Colonic mucosa (tissue), 4 donors: ENCODE measurements at regions of chr21 and their contacts with region 1.

Region 1: GRCh38 chr21:42593007-42593806 is 60.2 kb upstream of the PDE9A start:
- DNase-seq: peak; percentile 84
- H3K4me3 ChIP-seq: no peak overlapping the region
- H3K27ac ChIP-seq: no peak overlapping the region
- H3K4me1 ChIP-seq: peaks cover 6% of the 10 kb centered on the region
- H3K27me3 ChIP-seq: no peaks in the 10 kb centered on the region
- CTCF ChIP-seq: peak; percentile 81

Region 2: GRCh38 chr21:41269535-41269934 is 1323.7 kb before region 1 on chr21:
- intact Hi-C with region 1: no loop called
- DNase-seq: no peak
- H3K4me3 ChIP-seq: no peak overlapping the region
- H3K27ac ChIP-seq: no peak overlapping the region
- H3K4me1 ChIP-seq: no peaks in the 10 kb centered on the region
- H3K27me3 ChIP-seq: no peaks in the 10 kb centered on the region
- CTCF ChIP-seq: no peak

Region 3: DNA sequence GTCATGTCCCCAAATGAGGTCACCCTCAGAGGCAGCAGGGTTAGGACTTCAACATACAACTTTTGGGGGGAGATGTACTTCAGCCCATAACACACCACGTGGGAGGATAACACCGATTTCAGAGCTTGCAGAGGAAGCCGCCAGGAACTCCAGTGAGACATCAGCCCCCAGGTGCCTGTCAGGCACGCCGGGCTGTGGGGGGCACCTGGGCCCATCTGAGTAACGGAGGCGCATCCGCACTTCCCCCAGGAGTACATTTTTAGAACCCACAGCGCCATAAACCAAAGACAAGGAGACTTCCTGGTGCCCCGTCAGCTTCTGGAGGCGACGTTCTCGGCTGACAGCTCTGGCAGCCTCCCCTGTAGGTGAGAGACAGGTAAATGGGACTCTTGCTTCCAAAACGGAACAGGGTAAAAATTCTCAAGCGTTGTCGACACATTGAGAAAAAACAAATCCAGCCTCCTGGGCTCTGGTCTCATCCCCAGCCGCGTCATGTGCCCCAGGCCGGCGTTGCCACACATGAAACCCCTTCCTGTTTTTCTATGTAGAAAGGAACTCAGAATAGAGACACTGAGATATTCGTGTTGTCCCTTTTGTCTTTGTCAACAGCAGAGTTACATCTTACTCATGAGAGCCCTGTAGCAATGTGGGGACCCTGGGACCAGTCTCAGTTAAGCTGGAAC is 153.5 kb after region 1 on chr21:
- intact Hi-C with region 1: loop called (anchors 5 kb)
- DNase-seq: no peak
- H3K4me3 ChIP-seq: no peak overlapping the region
- H3K27ac ChIP-seq: peak overlapping the region; percentile 24
- H3K4me1 ChIP-seq: peaks cover 17% of the 10 kb centered on the region
- H3K27me3 ChIP-seq: no peaks in the 10 kb centered on the region
- CTCF ChIP-seq: no peak